ENCODE measurements at regions of chr15 and their contacts with region 1.

Region 1: DNA sequence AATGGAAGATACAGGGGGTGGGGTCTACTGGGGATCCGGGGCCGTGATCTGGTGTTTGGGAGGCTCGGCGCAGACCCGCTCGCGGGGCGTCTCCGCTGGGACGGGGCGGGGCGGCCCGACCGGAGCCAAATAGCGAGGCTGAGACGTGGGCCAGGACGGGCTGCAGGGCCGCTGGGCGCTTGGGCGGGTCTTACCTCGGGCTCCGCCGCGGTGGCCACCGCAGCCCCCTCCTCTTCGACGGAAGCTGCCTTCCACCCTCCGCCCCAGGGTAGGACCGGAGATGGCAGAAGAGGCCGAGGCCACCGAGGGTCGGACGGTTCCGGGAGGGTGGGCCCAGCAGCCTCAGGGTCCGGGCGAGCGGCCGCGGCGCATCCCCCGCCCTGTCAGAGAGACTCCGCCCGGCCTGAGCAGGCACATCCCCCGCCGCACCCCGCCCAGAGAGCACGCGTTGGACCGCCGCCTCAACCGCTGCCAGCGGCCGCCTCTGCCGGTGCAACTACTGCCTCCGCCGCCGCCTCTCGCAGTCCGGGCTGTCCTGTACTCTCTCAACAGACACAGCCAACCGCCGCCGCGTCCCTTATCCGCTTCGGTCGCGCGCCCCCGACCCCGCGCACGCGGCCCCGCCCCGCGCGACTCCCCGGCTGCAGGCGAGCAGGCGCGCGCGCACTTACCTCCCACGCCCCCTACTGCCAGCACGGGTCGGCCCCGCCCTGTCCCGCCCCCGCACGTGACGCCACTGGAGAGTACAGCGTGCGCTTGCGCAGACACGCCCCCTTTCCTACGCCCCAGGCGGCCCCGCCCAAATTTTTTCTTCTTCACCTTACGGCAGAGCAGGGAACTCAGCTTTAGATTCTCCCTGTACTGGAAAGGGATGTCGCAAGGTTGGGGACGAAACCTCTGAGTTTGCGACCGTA is at the start of gene MYO9A:
- DNase-seq: peak; percentile 97
- H3K4me3 ChIP-seq: peak within 1 kb of the TSS; percentile 99
- H3K4me3 Mint-ChIP-seq: peak within 1 kb of the TSS; percentile 99
- H3K27ac Mint-ChIP-seq: peak within 1 kb of the TSS; percentile 97
- H3K4me1 ChIP-seq: peaks cover 31% of the 10 kb centered on the region
- H3K4me1 Mint-ChIP-seq: peaks cover 45% of the 10 kb centered on the region
- H3K27me3 ChIP-seq: no peaks in the 10 kb centered on the region
- H3K27me3 Mint-ChIP-seq: no peaks in the 10 kb centered on the region
- CTCF ChIP-seq: peak in 1 of 2 experiments; percentile 17
- total RNA-seq, gene MYO9A: 71.9 and 76.0 TPM in 2 replicates

Region 2: GRCh38 chr15:71853543-71853942 is 264.2 kb before region 1 on chr15:
- CTCF ChIA-PET with region 1: no interaction called
- POLR2A ChIA-PET with region 1: interaction called, 10 read pairs
- intact Hi-C with region 1: no loop called
- DNase-seq: no peak
- H3K4me3 ChIP-seq: no peak overlapping the region
- H3K4me3 Mint-ChIP-seq: no peak overlapping the region
- H3K27ac Mint-ChIP-seq: no peak overlapping the region
- H3K4me1 ChIP-seq: no peaks in the 10 kb centered on the region
- H3K4me1 Mint-ChIP-seq: no peaks in the 10 kb centered on the region
- H3K27me3 ChIP-seq: no peaks in the 10 kb centered on the region
- H3K27me3 Mint-ChIP-seq: no peaks in the 10 kb centered on the region
- CTCF ChIP-seq: no peak

Region 3: DNA sequence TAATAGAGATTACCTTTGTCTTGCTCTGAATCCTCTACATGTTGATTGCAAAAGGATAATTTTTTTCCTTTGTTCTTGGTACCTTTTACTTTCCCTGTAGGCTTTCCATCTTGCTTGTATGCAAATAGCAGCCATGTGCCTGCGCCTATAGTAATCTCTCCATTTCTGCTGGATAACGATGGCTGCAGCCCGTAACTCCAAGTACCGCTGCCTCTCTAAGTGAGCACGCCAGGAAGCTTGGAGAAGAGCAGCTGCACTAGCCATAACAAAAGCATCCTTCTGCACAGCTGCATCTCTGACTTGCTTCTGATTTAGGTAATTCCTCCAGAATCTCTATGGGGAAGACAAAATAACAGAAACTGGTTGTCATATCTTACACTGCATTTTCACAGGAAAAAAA is 218.1 kb before region 1 on chr15:
- CTCF ChIA-PET with region 1: no interaction called
- POLR2A ChIA-PET with region 1: no interaction called
- intact Hi-C with region 1: no loop called
- DNase-seq: no peak
- H3K4me3 ChIP-seq: no peak overlapping the region
- H3K4me3 Mint-ChIP-seq: no peak overlapping the region
- H3K27ac Mint-ChIP-seq: no peak overlapping the region
- H3K4me1 ChIP-seq: no peaks in the 10 kb centered on the region
- H3K4me1 Mint-ChIP-seq: peaks cover 7% of the 10 kb centered on the region
- H3K27me3 ChIP-seq: no peaks in the 10 kb centered on the region
- H3K27me3 Mint-ChIP-seq: no peaks in the 10 kb centered on the region
- CTCF ChIP-seq: no peak

Region 4: GRCh38 chr15:71971905-71972304 is 145.8 kb before region 1 on chr15:
- CTCF ChIA-PET with region 1: no interaction called
- POLR2A ChIA-PET with region 1: no interaction called
- intact Hi-C with region 1: loop called (anchors 10 kb)
- DNase-seq: peak; percentile 44 to 45
- H3K4me3 ChIP-seq: no peak overlapping the region
- H3K4me3 Mint-ChIP-seq: peak overlapping the region; percentile 66
- H3K27ac Mint-ChIP-seq: peak overlapping the region; percentile 80
- H3K4me1 ChIP-seq: peaks cover 82% of the 10 kb centered on the region
- H3K4me1 Mint-ChIP-seq: peaks cover 69% of the 10 kb centered on the region
- H3K27me3 ChIP-seq: no peaks in the 10 kb centered on the region
- H3K27me3 Mint-ChIP-seq: no peaks in the 10 kb centered on the region
- CTCF ChIP-seq: no peak

Region 5: GRCh38 chr15:72011302-72011942 is 106.3 kb before region 1 on chr15:
- CTCF ChIA-PET with region 1: no interaction called
- POLR2A ChIA-PET with region 1: no interaction called
- intact Hi-C with region 1: loop called (anchors 5 kb)
- DNase-seq: no peak
- H3K4me3 ChIP-seq: no peak overlapping the region
- H3K4me3 Mint-ChIP-seq: no peak overlapping the region
- H3K27ac Mint-ChIP-seq: no peak overlapping the region
- H3K4me1 ChIP-seq: peaks cover 49% of the 10 kb centered on the region
- H3K4me1 Mint-ChIP-seq: peaks cover 13% of the 10 kb centered on the region
- H3K27me3 ChIP-seq: no peaks in the 10 kb centered on the region
- H3K27me3 Mint-ChIP-seq: no peaks in the 10 kb centered on the region
- CTCF ChIP-seq: no peak

Region 6: GRCh38 chr15:72105111-72105510 is 12.6 kb before region 1 on chr15:
- CTCF ChIA-PET with region 1: interaction called, 12 read pairs
- POLR2A ChIA-PET with region 1: no interaction called
- intact Hi-C with region 1: no loop called
- DNase-seq: no peak
- H3K4me3 ChIP-seq: no peak overlapping the region
- H3K4me3 Mint-ChIP-seq: no peak overlapping the region
- H3K27ac Mint-ChIP-seq: no peak overlapping the region
- H3K4me1 ChIP-seq: peaks cover 27% of the 10 kb centered on the region
- H3K4me1 Mint-ChIP-seq: peaks cover 20% of the 10 kb centered on the region
- H3K27me3 ChIP-seq: no peaks in the 10 kb centered on the region
- H3K27me3 Mint-ChIP-seq: no peaks in the 10 kb centered on the region
- CTCF ChIP-seq: no peak

Region 7: DNA sequence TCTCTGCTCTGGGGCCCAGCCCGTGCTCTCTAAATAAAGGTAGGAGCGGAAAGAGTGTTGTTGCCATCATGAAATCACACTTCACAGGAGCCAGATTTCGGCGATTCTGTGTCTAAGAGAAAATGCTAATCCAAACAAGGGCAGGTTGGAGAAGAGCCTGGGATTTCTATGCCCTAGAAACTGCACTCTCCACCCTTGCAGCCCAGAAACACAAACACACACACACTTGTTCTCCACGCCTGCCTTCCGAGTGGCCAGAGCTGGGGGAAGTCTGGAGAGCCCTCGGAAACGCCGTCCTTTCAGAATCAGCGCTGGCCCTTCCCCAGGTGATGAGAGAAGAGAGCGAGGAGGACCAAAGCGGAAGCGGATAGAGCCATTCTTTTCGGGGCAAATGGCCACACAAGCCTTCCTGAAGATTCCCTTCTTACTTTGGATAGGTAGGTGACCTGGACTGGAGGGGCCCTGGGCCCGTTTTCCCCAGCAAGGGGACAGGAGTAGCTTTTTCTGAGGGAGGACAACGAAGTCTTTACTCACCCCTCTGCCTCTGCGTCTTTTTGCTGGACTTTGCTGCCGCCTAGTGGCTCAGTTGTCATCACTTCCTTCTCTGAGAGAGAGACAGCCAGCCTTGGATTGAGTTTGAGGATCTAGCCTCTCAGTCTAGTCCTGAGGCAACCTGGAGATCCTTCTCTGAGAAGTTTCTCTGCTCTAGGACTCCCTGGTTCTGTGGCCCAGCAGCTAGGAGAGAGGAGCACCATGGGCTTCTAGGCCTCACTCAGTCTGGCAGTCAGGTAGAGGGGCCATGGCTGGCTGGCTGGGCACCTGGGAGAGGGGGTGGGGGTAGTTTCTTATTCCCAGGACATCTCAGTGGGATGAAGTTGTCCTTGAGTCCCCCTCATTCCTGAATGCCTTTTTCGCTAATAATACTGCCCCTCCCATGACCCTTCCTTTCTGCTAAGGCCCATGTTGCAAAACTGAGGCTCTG is 38.2 kb after region 1 on chr15:
- CTCF ChIA-PET with region 1: interaction called, 3 read pairs
- POLR2A ChIA-PET with region 1: no interaction called
- intact Hi-C with region 1: loop called (anchors 2 kb)
- DNase-seq: peak; percentile 82 to 85
- H3K4me3 ChIP-seq: peak overlapping the region; percentile 36
- H3K4me3 Mint-ChIP-seq: peak overlapping the region; percentile 76
- H3K27ac Mint-ChIP-seq: peak overlapping the region; percentile 60
- H3K4me1 ChIP-seq: no peaks in the 10 kb centered on the region; the same call in 1 of the 2 replicates
- H3K4me1 Mint-ChIP-seq: peaks cover 8% of the 10 kb centered on the region
- H3K27me3 ChIP-seq: no peaks in the 10 kb centered on the region
- H3K27me3 Mint-ChIP-seq: no peaks in the 10 kb centered on the region
- CTCF ChIP-seq: peak; percentile 78 to 85

Measured in Caco-2 (cell line).